K562 (cell line): ENCODE measurements at regions of chr20 and their contacts with region 1.

Region 1: GRCh38 chr20:35854713-35855434 is 83.1 kb downstream of the PHF20 start:
- DNase-seq: no peak
- ATAC-seq: no peak
- H3K4me3 ChIP-seq: no peak overlapping the region
- H3K27ac ChIP-seq: no peak overlapping the region
- H3K4me1 ChIP-seq: peaks cover 0 to 2% of the 10 kb centered on the region in 2 experiments; a peak in 1 of 5 replicates
- H3K27me3 ChIP-seq: no peaks in the 10 kb centered on the region
- CTCF ChIP-seq: no peak
- EP300 ChIP-seq: no peak
- POLR2A ChIP-seq: no peak
- RAD21 ChIP-seq: no peak

Region 2: DNA sequence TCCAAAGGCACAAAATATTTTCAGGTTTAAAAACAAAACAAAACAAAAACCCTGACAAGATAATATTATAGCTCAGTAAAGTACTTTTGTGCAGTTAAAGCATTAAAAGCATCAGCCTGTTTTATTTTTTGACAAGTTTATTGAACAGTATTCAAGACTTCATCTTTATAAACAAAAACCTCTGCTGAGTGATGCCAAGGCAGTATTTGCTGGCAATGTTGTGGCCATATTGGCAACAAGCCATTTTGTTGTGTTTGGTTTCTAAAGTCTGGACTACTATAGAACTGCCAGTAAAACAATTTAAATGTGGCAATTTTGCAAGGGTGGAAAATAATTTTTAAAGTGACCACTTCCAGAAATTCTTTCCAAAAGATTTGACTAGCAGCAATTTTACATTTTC is 206.0 kb before region 1 on chr20:
- CTCF ChIA-PET with region 1: no interaction called
- POLR2A ChIA-PET with region 1: no interaction called
- in situ Hi-C with region 1: no loop called
- intact Hi-C with region 1: no loop called
- DNase-seq: no peak
- ATAC-seq: no peak
- H3K4me3 ChIP-seq: no peak overlapping the region
- H3K27ac ChIP-seq: no peak overlapping the region
- H3K4me1 ChIP-seq: no peaks in the 10 kb centered on the region; a peak in 1 of 5 replicates
- H3K27me3 ChIP-seq: no peaks in the 10 kb centered on the region
- CTCF ChIP-seq: no peak
- EP300 ChIP-seq: no peak
- POLR2A ChIP-seq: no peak
- RAD21 ChIP-seq: no peak

Region 3: GRCh38 chr20:35871311-35871771 is 16.5 kb after region 1 on chr20:
- CTCF ChIA-PET with region 1: no interaction called
- POLR2A ChIA-PET with region 1: interaction called, 11 read pairs
- in situ Hi-C with region 1: no loop called
- intact Hi-C with region 1: no loop called
- DNase-seq: peak in 1 of 4 experiments; percentile 51
- ATAC-seq: peak; percentile 59
- H3K4me3 ChIP-seq: no peak overlapping the region
- H3K27ac ChIP-seq: peak overlapping the region; percentile 50; the same call in 1 of the 3 replicates
- H3K4me1 ChIP-seq: peaks cover 6 to 23% of the 10 kb centered on the region in 2 experiments
- H3K27me3 ChIP-seq: no peaks in the 10 kb centered on the region
- CTCF ChIP-seq: no peak
- EP300 ChIP-seq: no peak
- POLR2A ChIP-seq: no peak
- RAD21 ChIP-seq: no peak

Region 4: GRCh38 chr20:35978041-35978513 is 123.2 kb after region 1 on chr20:
- CTCF ChIA-PET with region 1: no interaction called
- POLR2A ChIA-PET with region 1: no interaction called
- in situ Hi-C with region 1: no loop called
- intact Hi-C with region 1: no loop called
- DNase-seq: peak in 1 of 4 experiments; percentile 30
- ATAC-seq: peak; percentile 77
- H3K4me3 ChIP-seq: no peak overlapping the region
- H3K27ac ChIP-seq: no peak overlapping the region
- H3K4me1 ChIP-seq: peaks cover 0 to 11% of the 10 kb centered on the region in 2 experiments; a peak in 2 of 5 replicates
- H3K27me3 ChIP-seq: no peaks in the 10 kb centered on the region
- CTCF ChIP-seq: no peak
- EP300 ChIP-seq: 0 out of 2 replicates have a peak, but pooled peaks have one; percentile 23
- POLR2A ChIP-seq: no peak
- RAD21 ChIP-seq: no peak

Region 5: DNA sequence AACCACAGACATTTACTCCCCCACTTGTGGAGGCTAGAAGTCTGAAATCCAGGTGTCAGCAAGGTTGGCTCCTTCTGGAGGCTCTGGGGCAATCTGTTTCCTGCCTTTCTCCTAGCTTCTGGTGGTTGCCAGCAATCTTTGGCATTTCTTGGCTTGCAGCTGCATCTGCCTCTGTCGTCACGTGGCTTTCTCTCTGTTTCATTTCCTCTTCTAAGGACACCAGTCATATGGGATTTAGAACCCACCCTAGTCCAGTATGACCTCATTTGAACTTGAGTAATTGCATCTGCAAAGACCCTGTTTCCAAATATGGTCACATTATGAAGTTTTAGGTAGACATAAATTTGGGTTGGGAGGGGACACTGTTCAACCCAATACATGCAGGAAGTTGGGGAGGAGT is 243.5 kb after region 1 on chr20:
- CTCF ChIA-PET with region 1: no interaction called
- POLR2A ChIA-PET with region 1: no interaction called
- in situ Hi-C with region 1: no loop called
- intact Hi-C with region 1: no loop called
- DNase-seq: no peak
- ATAC-seq: no peak
- H3K4me3 ChIP-seq: no peak overlapping the region
- H3K27ac ChIP-seq: no peak overlapping the region
- H3K4me1 ChIP-seq: peaks cover 18% of the 10 kb centered on the region in 2 experiments
- H3K27me3 ChIP-seq: no peaks in the 10 kb centered on the region
- CTCF ChIP-seq: no peak
- EP300 ChIP-seq: no peak
- POLR2A ChIP-seq: no peak
- RAD21 ChIP-seq: no peak